ENCODE measurements at regions of chr9 and their contacts with region 1.

Region 1: GRCh38 chr9:71819115-71819739 is 50.9 kb upstream of the CEMIP2 start:
- DNase-seq: peak; percentile 25 to 62 (median 44)
- H3K4me3 ChIP-seq: no peak overlapping the region
- H3K4me3 Mint-ChIP-seq: no peak overlapping the region
- H3K27ac ChIP-seq: no peak overlapping the region
- H3K27ac Mint-ChIP-seq: peak overlapping the region in 2 of 8 donors; percentile 15 to 69
- H3K4me1 ChIP-seq: peaks cover 8% of the 10 kb centered on the region
- H3K4me1 Mint-ChIP-seq: peaks cover 10 to 24% (median 18%) of the 10 kb centered on the region in 3 donors
- H3K27me3 ChIP-seq: no peaks in the 10 kb centered on the region
- H3K27me3 Mint-ChIP-seq: peaks cover 0 to 2% of the 10 kb centered on the region in 2 donors

Region 2: DNA sequence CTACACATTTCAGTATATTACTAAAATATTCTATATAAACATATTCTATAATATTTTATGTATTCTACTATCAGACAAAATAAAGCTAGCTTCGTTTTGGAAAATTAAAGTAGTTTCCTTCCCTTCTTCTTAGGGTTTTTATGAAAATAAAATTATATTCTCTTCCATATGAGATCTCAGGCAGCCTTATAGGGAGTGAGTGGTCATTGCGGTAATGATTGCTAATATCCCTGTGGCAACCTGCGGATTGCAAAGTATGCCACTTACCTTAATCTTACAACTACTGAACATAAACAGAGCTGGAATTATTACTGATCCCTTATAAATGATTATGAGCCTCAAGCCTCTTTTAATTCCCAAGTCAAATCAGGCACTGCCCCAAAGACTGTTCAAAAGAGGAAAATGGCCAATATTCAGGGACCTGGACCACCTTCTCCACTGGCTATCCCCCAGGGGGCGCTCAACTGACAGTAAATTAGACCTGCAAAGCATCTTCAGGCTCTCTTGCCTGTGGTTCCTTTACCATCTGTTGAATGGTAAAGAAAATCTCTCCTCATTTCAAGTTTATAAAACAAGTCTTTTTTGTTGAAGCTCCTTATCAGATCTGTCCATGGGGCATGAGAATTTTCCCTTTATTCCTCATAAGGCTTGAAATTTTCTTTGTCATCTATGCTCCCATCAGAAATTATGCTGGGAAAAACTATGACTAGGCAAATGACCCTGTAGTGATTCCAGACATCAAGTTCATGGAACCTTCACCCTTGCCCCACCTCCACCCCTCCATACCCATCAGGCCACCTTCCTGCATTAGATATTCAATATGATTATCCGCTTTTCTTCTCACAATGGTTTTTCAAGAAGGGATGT is 214.8 kb before region 1 on chr9:
- CTCF ChIA-PET with region 1: interaction called, 10 read pairs
- POLR2A ChIA-PET with region 1: no interaction called
- DNase-seq: peak; percentile 64 to 84 (median 69)
- H3K4me3 ChIP-seq: no peak overlapping the region
- H3K4me3 Mint-ChIP-seq: no peak overlapping the region
- H3K27ac ChIP-seq: no peak overlapping the region
- H3K27ac Mint-ChIP-seq: no peak overlapping the region
- H3K4me1 ChIP-seq: no peaks in the 10 kb centered on the region
- H3K4me1 Mint-ChIP-seq: no peaks in the 10 kb centered on the region
- H3K27me3 ChIP-seq: no peaks in the 10 kb centered on the region
- H3K27me3 Mint-ChIP-seq: no peaks in the 10 kb centered on the region

Region 3: GRCh38 chr9:71778085-71778484 is 41.1 kb before region 1 on chr9:
- CTCF ChIA-PET with region 1: interaction called, 28 read pairs
- POLR2A ChIA-PET with region 1: no interaction called
- DNase-seq: no peak
- H3K4me3 ChIP-seq: no peak overlapping the region
- H3K4me3 Mint-ChIP-seq: no peak overlapping the region
- H3K27ac ChIP-seq: no peak overlapping the region
- H3K27ac Mint-ChIP-seq: peak overlapping the region in 6 of 8 donors; percentile 18 to 89 (median 50)
- H3K4me1 ChIP-seq: peaks cover 30% of the 10 kb centered on the region
- H3K4me1 Mint-ChIP-seq: peaks cover 34 to 59% (median 39%) of the 10 kb centered on the region in 3 donors
- H3K27me3 ChIP-seq: no peaks in the 10 kb centered on the region
- H3K27me3 Mint-ChIP-seq: no peaks in the 10 kb centered on the region

Region 4: GRCh38 chr9:71783120-71783530 is 36.1 kb before region 1 on chr9:
- CTCF ChIA-PET with region 1: interaction called, 28 read pairs
- POLR2A ChIA-PET with region 1: no interaction called
- DNase-seq: peak; percentile 73 to 95 (median 88)
- H3K4me3 ChIP-seq: peak overlapping the region; percentile 7
- H3K4me3 Mint-ChIP-seq: peak overlapping the region; percentile 6 to 84 (median 80)
- H3K27ac ChIP-seq: peak overlapping the region; percentile 77
- H3K27ac Mint-ChIP-seq: peak overlapping the region; percentile 89 to 100 (median 98)
- H3K4me1 ChIP-seq: peaks cover 39% of the 10 kb centered on the region
- H3K4me1 Mint-ChIP-seq: peaks cover 47 to 59% (median 49%) of the 10 kb centered on the region in 3 donors
- H3K27me3 ChIP-seq: no peaks in the 10 kb centered on the region
- H3K27me3 Mint-ChIP-seq: no peaks in the 10 kb centered on the region

Region 5: GRCh38 chr9:71795097-71795813 is 24.0 kb before region 1 on chr9:
- CTCF ChIA-PET with region 1: interaction called, 18 read pairs
- POLR2A ChIA-PET with region 1: no interaction called
- DNase-seq: peak in 2 of 5 donors; percentile 65 to 77
- H3K4me3 ChIP-seq: peak overlapping the region; percentile 21
- H3K4me3 Mint-ChIP-seq: peak overlapping the region; percentile 16 to 74 (median 61)
- H3K27ac ChIP-seq: peak overlapping the region; percentile 2
- H3K27ac Mint-ChIP-seq: peak overlapping the region; percentile 76 to 98 (median 93)
- H3K4me1 ChIP-seq: peaks cover 60% of the 10 kb centered on the region
- H3K4me1 Mint-ChIP-seq: peaks cover 48 to 64% (median 62%) of the 10 kb centered on the region in 3 donors
- H3K27me3 ChIP-seq: no peaks in the 10 kb centered on the region
- H3K27me3 Mint-ChIP-seq: no peaks in the 10 kb centered on the region

Region 6: GRCh38 chr9:71806901-71807307 is 12.3 kb before region 1 on chr9:
- CTCF ChIA-PET with region 1: interaction called, 85 read pairs
- POLR2A ChIA-PET with region 1: no interaction called
- DNase-seq: peak; percentile 29 to 77 (median 56)
- H3K4me3 ChIP-seq: no peak overlapping the region
- H3K4me3 Mint-ChIP-seq: no peak overlapping the region
- H3K27ac ChIP-seq: no peak overlapping the region
- H3K27ac Mint-ChIP-seq: peak overlapping the region in 4 of 8 donors; percentile 8 to 81 (median 29)
- H3K4me1 ChIP-seq: peaks cover 9% of the 10 kb centered on the region
- H3K4me1 Mint-ChIP-seq: peaks cover 7% of the 10 kb centered on the region in 3 donors
- H3K27me3 ChIP-seq: no peaks in the 10 kb centered on the region
- H3K27me3 Mint-ChIP-seq: no peaks in the 10 kb centered on the region

Region 7: DNA sequence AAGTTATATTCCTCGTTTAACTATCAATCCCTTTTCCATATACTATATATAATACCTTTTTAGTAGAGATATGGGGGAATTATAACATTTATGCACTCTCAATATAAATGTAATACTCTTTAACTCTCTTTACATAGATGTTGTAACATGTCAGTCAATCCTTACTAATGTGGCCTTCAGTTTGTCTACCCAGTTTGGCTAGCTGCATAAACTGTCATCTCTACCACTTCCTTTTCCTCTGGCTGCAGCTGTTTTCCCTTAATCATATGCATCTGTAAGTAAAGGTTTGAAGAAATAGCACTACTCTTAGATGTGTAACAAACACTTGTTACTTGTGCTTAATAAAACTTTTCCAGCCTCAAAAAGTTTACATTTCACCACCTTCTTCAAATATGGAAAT is 78.3 kb after region 1 on chr9:
- CTCF ChIA-PET with region 1: interaction called, 11 read pairs
- POLR2A ChIA-PET with region 1: no interaction called
- DNase-seq: peak in 2 of 5 donors; percentile 19 to 22
- H3K4me3 ChIP-seq: no peak overlapping the region
- H3K4me3 Mint-ChIP-seq: peak overlapping the region; percentile 3 to 81 (median 59)
- H3K27ac ChIP-seq: no peak overlapping the region
- H3K27ac Mint-ChIP-seq: peak overlapping the region; percentile 2 to 87 (median 74)
- H3K4me1 ChIP-seq: peaks cover 52% of the 10 kb centered on the region
- H3K4me1 Mint-ChIP-seq: peaks cover 73 to 94% (median 87%) of the 10 kb centered on the region in 3 donors
- H3K27me3 ChIP-seq: no peaks in the 10 kb centered on the region
- H3K27me3 Mint-ChIP-seq: no peaks in the 10 kb centered on the region

Measured in CD8-positive, alpha-beta memory T cell (primary cell).